ENCODE measurements at regions of chr19 and their contacts with region 1.

Region 1: GRCh38 chr19:46954993-46955812 is 64.4 kb upstream of the NPAS1 start:
- DNase-seq: peak; percentile 68 to 79 (median 74)
- H3K4me3 ChIP-seq: peak overlapping the region; percentile 51 to 62
- H3K4me3 Mint-ChIP-seq: peak overlapping the region; percentile 75 to 92 (median 88)
- H3K27ac ChIP-seq: peak overlapping the region; percentile 53
- H3K27ac Mint-ChIP-seq: peak overlapping the region; percentile 91 to 96 (median 94)
- H3K4me1 ChIP-seq: peaks cover 93% of the 10 kb centered on the region
- H3K4me1 Mint-ChIP-seq: peaks cover 65 to 86% (median 74%) of the 10 kb centered on the region in 4 donors
- H3K27me3 ChIP-seq: no peaks in the 10 kb centered on the region
- H3K27me3 Mint-ChIP-seq: no peaks in the 10 kb centered on the region

Region 2: DNA sequence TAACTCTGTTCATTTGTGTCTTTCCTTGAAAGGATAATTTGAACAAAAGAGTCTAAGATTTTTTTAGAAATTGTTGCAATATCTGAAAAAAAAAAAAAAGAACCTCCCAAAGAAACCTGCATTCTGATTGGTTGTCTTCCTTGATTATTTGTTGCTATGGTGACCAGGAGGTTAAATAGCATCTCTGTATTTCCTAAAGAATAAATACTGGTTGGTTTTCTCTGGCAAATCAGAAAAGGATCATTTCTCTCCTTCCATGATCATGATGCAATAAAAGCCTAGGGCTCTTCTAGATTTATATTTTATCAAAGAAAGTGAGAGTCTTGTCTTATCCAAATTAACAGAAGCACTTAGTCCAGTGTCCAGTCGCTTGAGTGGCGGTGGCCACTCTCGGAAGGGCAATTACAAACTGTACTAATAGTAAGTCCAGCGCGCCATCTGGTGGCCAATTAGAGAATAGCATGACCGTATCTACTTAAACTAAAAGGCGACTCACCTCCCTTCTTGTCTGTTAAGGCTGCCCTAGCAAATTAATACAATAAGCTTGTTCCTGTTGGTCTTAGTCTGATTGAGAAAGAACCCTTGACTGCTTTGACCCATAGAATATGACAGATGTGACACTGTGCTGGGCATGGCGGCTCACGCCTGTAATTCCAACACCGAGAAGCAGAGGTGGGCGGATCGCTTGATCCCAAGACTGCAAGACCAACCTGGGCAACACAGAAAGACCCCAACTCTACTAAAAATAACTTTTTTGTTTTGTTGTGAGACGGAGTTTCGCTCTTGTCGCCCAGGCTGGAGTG is 412.6 kb before region 1 on chr19:
- CTCF ChIA-PET with region 1: no interaction called
- POLR2A ChIA-PET with region 1: no interaction called
- intact Hi-C with region 1: no loop called
- DNase-seq: peak; percentile 62 to 81 (median 66)
- H3K4me3 ChIP-seq: no peak overlapping the region
- H3K4me3 Mint-ChIP-seq: no peak overlapping the region
- H3K27ac ChIP-seq: no peak overlapping the region
- H3K27ac Mint-ChIP-seq: peak overlapping the region in 1 of 7 donors; percentile 16
- H3K4me1 ChIP-seq: peaks cover 3% of the 10 kb centered on the region
- H3K4me1 Mint-ChIP-seq: peaks cover 1 to 6% (median 5%) of the 10 kb centered on the region in 4 donors
- H3K27me3 ChIP-seq: no peaks in the 10 kb centered on the region
- H3K27me3 Mint-ChIP-seq: peaks cover 0 to under 1% of the 10 kb centered on the region in 2 donors

Region 3: GRCh38 chr19:46860125-46860845 is 94.9 kb before region 1 on chr19:
- CTCF ChIA-PET with region 1: interaction called, 6 read pairs
- POLR2A ChIA-PET with region 1: interaction called, 36 read pairs
- intact Hi-C with region 1: loop called (anchors 1 kb)
- DNase-seq: peak; percentile 93 to 96 (median 94)
- H3K4me3 ChIP-seq: peak overlapping the region; percentile 42 to 78
- H3K4me3 Mint-ChIP-seq: peak overlapping the region; percentile 91 to 98 (median 95)
- H3K27ac ChIP-seq: peak overlapping the region; percentile 79
- H3K27ac Mint-ChIP-seq: peak overlapping the region; percentile 94 to 99 (median 97)
- H3K4me1 ChIP-seq: peaks cover 62% of the 10 kb centered on the region
- H3K4me1 Mint-ChIP-seq: peaks cover 19 to 22% (median 19%) of the 10 kb centered on the region in 4 donors
- H3K27me3 ChIP-seq: no peaks in the 10 kb centered on the region
- H3K27me3 Mint-ChIP-seq: no peaks in the 10 kb centered on the region

Region 4: DNA sequence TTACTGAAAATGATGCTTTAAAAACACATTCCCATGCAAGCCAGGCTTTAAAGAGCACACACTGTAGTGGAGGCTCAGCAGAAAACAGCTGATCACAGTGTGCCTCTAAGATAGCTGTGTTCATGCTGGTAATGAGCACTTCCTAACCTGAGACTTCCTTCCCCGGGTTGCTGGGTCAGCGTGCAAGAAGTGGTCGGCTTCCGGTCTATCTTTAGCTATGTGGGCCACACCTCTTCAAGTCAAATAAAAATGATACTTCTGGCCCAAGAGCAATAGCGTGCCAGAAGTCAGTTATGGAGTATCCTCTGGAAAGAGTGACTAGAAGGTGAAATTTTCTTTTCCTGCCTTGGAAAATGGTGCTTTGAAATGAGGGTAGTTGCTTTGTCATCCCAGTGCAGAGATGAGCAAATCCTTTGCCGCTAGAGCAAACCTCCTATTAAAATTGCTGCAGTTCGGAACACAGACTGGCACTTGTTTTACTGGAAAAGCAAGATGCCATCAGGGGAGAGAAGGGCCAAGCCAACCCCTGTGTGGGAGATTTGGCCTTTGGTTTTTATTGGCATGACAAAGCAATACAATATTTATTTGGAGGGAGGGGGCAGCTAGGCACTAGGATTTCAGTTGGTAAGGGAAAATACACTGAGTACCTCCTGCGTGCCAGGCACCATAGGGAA is 30.2 kb before region 1 on chr19:
- CTCF ChIA-PET with region 1: interaction called, 22 read pairs
- POLR2A ChIA-PET with region 1: interaction called, 68 read pairs
- intact Hi-C with region 1: loop called (anchors 5 kb)
- DNase-seq: no peak
- H3K4me3 ChIP-seq: no peak overlapping the region
- H3K4me3 Mint-ChIP-seq: peak overlapping the region in 7 of 8 donors; percentile 62 to 74 (median 74)
- H3K27ac ChIP-seq: no peak overlapping the region
- H3K27ac Mint-ChIP-seq: peak overlapping the region in 6 of 7 donors; percentile 38 to 88 (median 76)
- H3K4me1 ChIP-seq: peaks cover 47% of the 10 kb centered on the region
- H3K4me1 Mint-ChIP-seq: peaks cover 44 to 68% (median 56%) of the 10 kb centered on the region in 4 donors
- H3K27me3 ChIP-seq: no peaks in the 10 kb centered on the region
- H3K27me3 Mint-ChIP-seq: no peaks in the 10 kb centered on the region

Region 5: GRCh38 chr19:46932346-46932745 is 22.9 kb before region 1 on chr19:
- CTCF ChIA-PET with region 1: interaction called, 22 read pairs
- POLR2A ChIA-PET with region 1: interaction called, 90 read pairs
- intact Hi-C with region 1: loop called (anchors 1 kb)
- DNase-seq: no peak
- H3K4me3 ChIP-seq: no peak overlapping the region
- H3K4me3 Mint-ChIP-seq: no peak overlapping the region
- H3K27ac ChIP-seq: no peak overlapping the region
- H3K27ac Mint-ChIP-seq: peak overlapping the region; percentile 23 to 92 (median 84)
- H3K4me1 ChIP-seq: peaks cover 81% of the 10 kb centered on the region
- H3K4me1 Mint-ChIP-seq: peaks cover 60 to 88% (median 76%) of the 10 kb centered on the region in 4 donors
- H3K27me3 ChIP-seq: no peaks in the 10 kb centered on the region
- H3K27me3 Mint-ChIP-seq: no peaks in the 10 kb centered on the region

Region 6: GRCh38 chr19:46944918-46945628 is 10.1 kb before region 1 on chr19:
- CTCF ChIA-PET with region 1: interaction called, 9 read pairs
- POLR2A ChIA-PET with region 1: interaction called, 86 read pairs
- intact Hi-C with region 1: no loop called
- DNase-seq: no peak
- H3K4me3 ChIP-seq: no peak overlapping the region
- H3K4me3 Mint-ChIP-seq: peak overlapping the region in 1 of 8 donors; percentile 26
- H3K27ac ChIP-seq: no peak overlapping the region
- H3K27ac Mint-ChIP-seq: peak overlapping the region in 3 of 7 donors; percentile 59 to 88 (median 63)
- H3K4me1 ChIP-seq: peaks cover 61% of the 10 kb centered on the region
- H3K4me1 Mint-ChIP-seq: peaks cover 41 to 68% (median 55%) of the 10 kb centered on the region in 4 donors
- H3K27me3 ChIP-seq: no peaks in the 10 kb centered on the region
- H3K27me3 Mint-ChIP-seq: no peaks in the 10 kb centered on the region

Region 7: DNA sequence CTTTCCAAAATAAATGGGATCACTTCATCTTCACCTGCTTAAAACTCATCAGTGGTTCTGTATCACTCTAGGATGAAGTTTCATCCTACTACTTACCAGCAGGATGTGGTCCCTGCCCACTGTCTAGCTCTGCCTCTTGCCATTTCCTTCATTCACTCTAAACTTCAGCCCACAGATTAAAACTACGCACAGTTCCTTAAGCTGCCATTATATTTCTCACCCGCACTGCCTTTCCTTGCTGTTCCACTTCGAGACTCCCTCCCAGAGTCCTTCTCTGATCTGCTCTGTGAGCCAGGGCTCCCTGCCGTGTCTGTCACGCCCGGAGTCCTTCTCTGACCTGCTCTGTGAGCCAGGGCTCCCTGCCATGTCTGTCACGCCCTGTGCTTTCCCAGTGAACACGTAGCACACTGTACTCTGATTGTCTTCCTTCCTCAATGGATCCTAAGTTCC is 12.4 kb after region 1 on chr19:
- CTCF ChIA-PET with region 1: interaction called, 4 read pairs
- POLR2A ChIA-PET with region 1: interaction called, 36 read pairs
- intact Hi-C with region 1: no loop called
- DNase-seq: peak; percentile 36 to 59 (median 48)
- H3K4me3 ChIP-seq: peak overlapping the region; percentile 22 to 32
- H3K4me3 Mint-ChIP-seq: peak overlapping the region; percentile 33 to 83 (median 68)
- H3K27ac ChIP-seq: peak overlapping the region; percentile 18
- H3K27ac Mint-ChIP-seq: peak overlapping the region; percentile 4 to 89 (median 80)
- H3K4me1 ChIP-seq: peaks cover 40% of the 10 kb centered on the region
- H3K4me1 Mint-ChIP-seq: peaks cover 26 to 55% (median 39%) of the 10 kb centered on the region in 4 donors
- H3K27me3 ChIP-seq: no peaks in the 10 kb centered on the region
- H3K27me3 Mint-ChIP-seq: no peaks in the 10 kb centered on the region

Region 8: DNA sequence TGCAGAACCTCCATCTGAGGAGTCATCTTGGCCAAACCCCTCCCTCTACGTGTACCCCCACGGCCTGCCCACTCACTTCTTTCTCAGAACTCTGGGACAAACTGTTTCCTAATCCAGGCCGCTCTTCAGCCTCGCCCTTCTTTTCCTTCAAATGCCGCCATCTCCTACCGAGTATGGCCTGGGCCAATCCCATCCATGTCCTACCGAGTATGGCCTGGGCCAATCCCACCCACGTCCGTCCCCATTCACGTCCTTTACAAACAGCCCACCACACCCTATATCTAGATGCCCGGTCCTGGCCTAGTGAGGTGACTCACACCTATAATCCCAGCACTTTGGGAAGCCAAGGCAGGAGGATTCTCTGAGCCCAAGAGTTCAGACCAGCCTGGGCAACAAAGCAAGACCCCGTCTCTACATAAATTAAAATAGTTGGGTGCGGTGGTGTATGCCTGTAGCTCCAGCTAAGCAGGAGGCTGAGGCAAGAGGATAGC is 92.1 kb after region 1 on chr19:
- CTCF ChIA-PET with region 1: no interaction called
- POLR2A ChIA-PET with region 1: no interaction called
- intact Hi-C with region 1: no loop called
- DNase-seq: no peak
- H3K4me3 ChIP-seq: peak overlapping the region in 1 of 2 donors; percentile 71
- H3K4me3 Mint-ChIP-seq: peak overlapping the region; percentile 95 to 98 (median 97)
- H3K27ac ChIP-seq: no peak overlapping the region
- H3K27ac Mint-ChIP-seq: peak overlapping the region in 5 of 7 donors; percentile 13 to 93 (median 67)
- H3K4me1 ChIP-seq: peaks cover 13% of the 10 kb centered on the region
- H3K4me1 Mint-ChIP-seq: peaks cover 7 to 21% (median 14%) of the 10 kb centered on the region in 4 donors
- H3K27me3 ChIP-seq: no peaks in the 10 kb centered on the region
- H3K27me3 Mint-ChIP-seq: no peaks in the 10 kb centered on the region

Measured in CD4-positive, alpha-beta memory T cell (primary cell).